Right lobe of liver (tissue), 6 donors: ENCODE measurements at regions of chr12 and their contacts with region 1.

Region 1: DNA sequence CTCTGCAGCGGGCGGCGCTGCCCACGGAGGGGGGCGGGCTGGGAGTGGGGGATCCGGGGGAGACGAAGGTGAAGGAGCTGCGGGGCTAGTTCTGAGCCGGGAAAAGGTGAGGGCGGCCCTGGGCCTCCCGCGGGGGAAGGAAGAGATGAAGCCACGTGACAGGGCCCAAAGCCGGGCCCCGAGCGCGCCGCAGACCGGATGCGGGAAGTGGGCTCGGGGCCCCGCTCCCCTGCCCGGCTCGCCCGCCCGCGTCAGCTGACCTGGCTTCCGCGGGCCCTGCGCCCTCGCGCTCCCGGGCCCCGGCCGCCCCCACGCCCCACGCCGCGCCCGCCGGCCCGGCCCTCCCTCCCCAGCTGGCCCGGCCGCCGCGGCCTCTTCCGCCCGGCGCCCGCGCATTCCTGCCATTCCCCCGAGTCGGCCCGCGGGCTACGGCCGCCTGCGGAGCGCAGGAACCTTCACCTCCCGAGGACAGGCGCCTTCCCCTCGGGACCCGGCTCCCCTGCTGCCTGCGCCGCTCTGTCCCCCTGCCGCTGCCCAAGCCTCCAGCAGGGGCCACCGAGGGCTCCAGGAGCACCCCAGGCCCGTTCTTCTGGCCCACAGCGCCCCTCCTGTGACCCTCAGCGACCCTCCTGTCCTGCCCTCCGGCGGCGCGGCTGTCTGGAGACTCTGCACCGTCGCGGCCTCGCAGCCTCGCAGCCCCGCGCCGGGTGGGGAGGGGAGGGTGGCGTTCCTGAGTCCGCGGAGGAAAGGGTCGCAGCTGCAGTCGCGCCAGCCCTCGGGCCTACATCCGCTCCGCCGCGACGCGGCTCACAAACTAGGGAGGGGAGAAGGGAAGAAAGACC is 20.4 kb downstream of the NINJ2 start:
- DNase-seq: peak; percentile 87 to 88 (median 87)
- ATAC-seq: peak; percentile 44 to 71 (median 67)
- H3K4me3 ChIP-seq: peak overlapping the region; percentile 64 to 74 (median 72)
- H3K27ac ChIP-seq: peak overlapping the region; percentile 90 to 97 (median 96)
- H3K4me1 ChIP-seq: peaks cover 4 to 43% (median 23%) of the 10 kb centered on the region in 4 donors
- H3K27me3 ChIP-seq: no peaks in the 10 kb centered on the region
- CTCF ChIP-seq: peak in 3 of 4 donors; percentile 18 to 33 (median 32)
- POLR2A ChIP-seq: peak; percentile 62

Region 2: GRCh38 chr12:583234-583869 is 59.5 kb before region 1 on chr12:
- intact Hi-C with region 1: loop called (anchors 10 kb)
- DNase-seq: peak; percentile 82 to 94 (median 91)
- ATAC-seq: peak; percentile 77 to 84 (median 82)
- H3K4me3 ChIP-seq: no peak overlapping the region
- H3K27ac ChIP-seq: peak overlapping the region; percentile 23 to 72 (median 38)
- H3K4me1 ChIP-seq: peaks cover 0 to 52% (median 26%) of the 10 kb centered on the region in 4 donors
- H3K27me3 ChIP-seq: no peaks in the 10 kb centered on the region
- CTCF ChIP-seq: no peak
- POLR2A ChIP-seq: peak; percentile 49

Region 3: DNA sequence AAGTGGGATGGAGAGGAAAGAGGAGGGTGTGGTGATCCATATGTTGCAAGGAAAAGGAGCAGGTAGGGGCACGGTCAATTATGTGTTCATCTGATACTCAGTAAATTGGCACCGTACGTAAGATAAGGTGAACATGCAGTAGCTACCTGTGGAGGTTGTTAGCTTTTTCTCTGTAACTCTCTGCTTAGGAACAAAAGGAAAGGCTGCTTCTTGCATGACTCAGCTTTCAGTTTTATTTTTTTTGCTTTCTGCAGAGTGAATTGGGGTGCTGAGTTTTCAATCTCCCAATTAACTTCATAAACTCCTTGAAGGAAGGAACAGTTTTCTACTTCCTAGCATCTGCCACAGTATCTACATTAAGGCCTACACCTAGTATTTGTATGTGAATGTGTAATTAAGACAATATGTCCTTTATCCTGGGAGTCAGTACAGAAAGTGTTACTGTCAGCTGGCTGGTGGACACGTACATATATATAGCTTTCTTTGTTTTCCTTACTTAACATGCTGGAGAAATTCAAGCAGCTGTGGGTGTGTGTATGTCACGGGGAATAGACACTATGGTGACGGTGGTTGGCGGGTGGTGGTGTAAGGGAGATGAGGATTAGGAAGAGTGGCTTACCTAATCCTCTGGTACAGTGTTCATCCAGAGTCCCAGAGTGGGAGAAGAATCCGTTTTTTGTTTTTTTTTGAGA is 69.5 kb after region 1 on chr12:
- intact Hi-C with region 1: no loop called
- DNase-seq: no peak
- ATAC-seq: no peak
- H3K4me3 ChIP-seq: no peak overlapping the region
- H3K27ac ChIP-seq: no peak overlapping the region
- H3K4me1 ChIP-seq: no peaks in the 10 kb centered on the region
- H3K27me3 ChIP-seq: no peaks in the 10 kb centered on the region
- CTCF ChIP-seq: no peak
- POLR2A ChIP-seq: no peak

Region 4: DNA sequence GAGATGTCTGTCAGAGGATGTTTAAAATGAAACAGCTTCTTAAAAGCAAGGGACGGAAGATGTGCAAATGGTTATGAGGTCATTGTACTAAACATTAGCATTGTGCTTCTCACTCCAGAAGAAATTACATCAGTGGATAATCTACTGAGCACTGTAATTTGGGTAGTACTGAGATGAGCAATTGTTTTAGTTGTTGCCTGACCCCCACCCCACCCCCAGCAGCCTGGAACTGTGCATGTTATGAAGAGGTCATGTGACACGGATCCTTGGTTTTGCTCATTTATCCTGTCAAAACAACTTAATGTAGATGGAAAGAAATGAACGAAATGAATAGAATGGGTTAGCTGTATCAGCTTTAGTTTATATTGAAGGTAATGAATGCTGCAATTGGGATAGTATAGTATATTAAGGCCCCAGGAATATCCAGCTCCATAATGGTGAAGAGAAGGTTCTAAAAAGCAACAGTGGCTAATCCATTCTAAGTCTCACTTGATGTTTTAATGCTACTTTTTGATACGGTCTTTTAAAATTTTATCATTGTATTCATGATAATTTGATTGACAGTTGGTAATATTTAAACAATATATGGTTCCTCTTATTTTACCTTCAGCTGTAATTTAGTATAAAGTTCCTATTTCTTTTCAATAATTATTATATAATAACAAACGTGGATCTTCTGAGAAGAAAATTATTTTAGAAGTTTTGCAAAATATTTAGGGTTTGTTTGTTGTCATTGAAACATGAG is 168.0 kb after region 1 on chr12:
- intact Hi-C with region 1: loop called in 1 of 2 experiments (anchors 5 kb)
- DNase-seq: no peak
- ATAC-seq: no peak
- H3K4me3 ChIP-seq: no peak overlapping the region
- H3K27ac ChIP-seq: no peak overlapping the region
- H3K4me1 ChIP-seq: peaks cover 0 to 9% (median 4%) of the 10 kb centered on the region in 4 donors
- H3K27me3 ChIP-seq: no peaks in the 10 kb centered on the region
- CTCF ChIP-seq: no peak
- POLR2A ChIP-seq: no peak